Heart left ventricle (tissue), 16 donors: ENCODE measurements at regions of chrX and their contacts with region 1.

Region 1: DNA sequence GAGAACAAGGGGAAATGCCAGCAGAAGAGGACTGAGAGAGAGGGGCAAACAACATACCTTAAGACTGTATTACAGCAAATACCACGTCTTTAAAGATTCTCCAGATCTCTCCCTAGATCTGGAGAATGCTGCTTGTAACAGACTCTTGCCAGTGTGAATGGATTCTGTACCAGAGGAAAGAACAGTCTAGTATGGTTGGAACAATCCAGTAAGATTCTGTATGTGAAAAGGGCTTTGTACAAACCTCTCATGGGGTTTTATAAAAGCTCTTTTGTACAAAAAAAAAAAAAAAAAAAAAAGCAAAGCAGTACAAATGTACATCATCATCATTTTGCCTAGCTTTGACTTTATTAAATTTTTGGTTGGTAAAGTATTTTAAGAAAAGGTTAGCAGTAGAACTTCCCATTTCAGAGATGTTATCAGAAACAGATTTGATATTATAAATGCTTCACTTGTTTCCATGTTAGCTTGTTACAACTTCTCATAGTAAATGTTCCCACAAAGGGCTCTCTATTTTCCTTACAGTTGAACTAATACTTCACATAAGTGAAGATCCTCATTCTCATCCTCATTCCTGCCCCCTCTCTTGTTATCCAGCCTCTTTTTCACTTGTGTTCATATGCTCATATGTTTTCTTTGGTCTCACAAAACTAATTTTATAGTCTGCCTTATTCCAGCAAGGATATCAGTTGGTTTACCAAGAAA is 144.2 kb downstream of the EDA start:
- DNase-seq: no peak
- ATAC-seq: no peak
- H3K4me3 ChIP-seq: no peak overlapping the region
- H3K27ac ChIP-seq: no peak overlapping the region
- H3K4me1 ChIP-seq: peaks cover 0 to 12% (median 0%) of the 10 kb centered on the region in 12 donors
- H3K27me3 ChIP-seq: no peaks in the 10 kb centered on the region
- CTCF ChIP-seq: no peak
- POLR2A ChIP-seq: no peak

Region 2: GRCh38 chrX:69503782-69504625 is 256.1 kb before region 1 on chrX and contains the start of gene NALF2:
- intact Hi-C with region 1: loop called in 1 of 10 experiments (anchors 10 kb)
- DNase-seq: peak in 4 of 5 donors; percentile 40 to 69 (median 60)
- ATAC-seq: peak; percentile 33 to 83 (median 71)
- H3K4me3 ChIP-seq: peak within 1 kb of the TSS; percentile 29 to 64 (median 53)
- H3K27ac ChIP-seq: peak within 1 kb of the TSS in 8 of 12 donors; percentile 32 to 81 (median 56)
- H3K4me1 ChIP-seq: peaks cover 0 to 13% (median 0%) of the 10 kb centered on the region in 12 donors
- H3K27me3 ChIP-seq: peaks cover 0 to 40% (median 0%) of the 10 kb centered on the region in 9 donors
- CTCF ChIP-seq: peak in 3 of 12 donors; percentile 3 to 15 (median 4)
- POLR2A ChIP-seq: no peak
- total RNA-seq, gene NALF2: 6.0 to 60.5 (median 18.0) TPM

Region 3: GRCh38 chrX:70001269-70001668 is 241.2 kb after region 1 on chrX:
- intact Hi-C with region 1: loop called in 1 of 10 experiments (anchors 10 kb)
- DNase-seq: peak; percentile 20 to 73 (median 58)
- ATAC-seq: peak; percentile 80 to 90 (median 89)
- H3K4me3 ChIP-seq: no peak overlapping the region
- H3K27ac ChIP-seq: peak overlapping the region in 10 of 12 donors; percentile 32 to 84 (median 62)
- H3K4me1 ChIP-seq: peaks cover 0 to 12% (median 0%) of the 10 kb centered on the region in 12 donors
- H3K27me3 ChIP-seq: no peaks in the 10 kb centered on the region
- CTCF ChIP-seq: no peak
- POLR2A ChIP-seq: no peak

Region 4: DNA sequence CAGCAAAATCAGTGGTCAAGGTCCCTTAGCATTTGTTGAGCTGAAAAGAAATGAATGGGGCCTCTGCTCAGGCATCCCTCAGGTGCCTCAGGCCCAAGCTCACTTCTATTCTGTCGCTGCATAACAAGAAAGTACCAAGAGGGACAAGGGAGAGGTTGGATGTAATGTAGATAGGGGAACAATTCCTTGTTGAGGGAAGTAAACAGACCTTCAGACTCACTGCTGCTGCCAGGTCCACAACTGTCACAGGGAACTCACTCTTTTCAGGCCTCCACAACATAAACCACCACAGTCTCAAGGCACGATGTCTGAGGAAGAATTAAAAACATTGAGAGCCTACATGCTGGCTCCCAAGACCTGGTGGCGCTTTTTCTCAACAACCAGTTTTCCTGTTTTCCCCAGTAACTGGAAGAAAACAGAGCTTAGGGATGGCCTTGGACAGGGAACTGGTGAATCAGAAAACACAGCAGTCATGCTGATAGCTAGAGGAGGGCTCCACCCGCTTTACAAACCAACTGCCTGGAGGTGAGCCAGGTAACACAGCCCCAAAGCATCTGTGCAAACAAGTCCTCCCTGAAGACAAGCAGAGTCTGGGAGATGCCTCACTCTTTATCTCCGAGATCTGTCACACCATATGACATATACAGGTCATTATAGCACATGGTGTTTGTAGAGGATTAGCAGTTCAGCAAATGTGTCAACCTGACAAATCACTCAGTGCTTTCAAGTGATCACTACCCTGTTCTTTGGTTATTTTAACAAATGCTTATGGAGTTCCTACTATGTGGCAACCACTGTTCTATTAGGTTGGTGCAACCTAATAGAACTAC is 460.1 kb after region 1 on chrX:
- intact Hi-C with region 1: no loop called
- DNase-seq: peak in 1 of 5 donors; percentile 6
- ATAC-seq: peak in 1 of 4 donors; percentile 46
- H3K4me3 ChIP-seq: no peak overlapping the region
- H3K27ac ChIP-seq: no peak overlapping the region
- H3K4me1 ChIP-seq: no peaks in the 10 kb centered on the region
- H3K27me3 ChIP-seq: peaks cover 0 to 19% (median 0%) of the 10 kb centered on the region in 9 donors
- CTCF ChIP-seq: no peak
- POLR2A ChIP-seq: no peak